GM18951 (cell line): ENCODE measurements at regions of chr9 and their contacts with region 1.

Region 1: DNA sequence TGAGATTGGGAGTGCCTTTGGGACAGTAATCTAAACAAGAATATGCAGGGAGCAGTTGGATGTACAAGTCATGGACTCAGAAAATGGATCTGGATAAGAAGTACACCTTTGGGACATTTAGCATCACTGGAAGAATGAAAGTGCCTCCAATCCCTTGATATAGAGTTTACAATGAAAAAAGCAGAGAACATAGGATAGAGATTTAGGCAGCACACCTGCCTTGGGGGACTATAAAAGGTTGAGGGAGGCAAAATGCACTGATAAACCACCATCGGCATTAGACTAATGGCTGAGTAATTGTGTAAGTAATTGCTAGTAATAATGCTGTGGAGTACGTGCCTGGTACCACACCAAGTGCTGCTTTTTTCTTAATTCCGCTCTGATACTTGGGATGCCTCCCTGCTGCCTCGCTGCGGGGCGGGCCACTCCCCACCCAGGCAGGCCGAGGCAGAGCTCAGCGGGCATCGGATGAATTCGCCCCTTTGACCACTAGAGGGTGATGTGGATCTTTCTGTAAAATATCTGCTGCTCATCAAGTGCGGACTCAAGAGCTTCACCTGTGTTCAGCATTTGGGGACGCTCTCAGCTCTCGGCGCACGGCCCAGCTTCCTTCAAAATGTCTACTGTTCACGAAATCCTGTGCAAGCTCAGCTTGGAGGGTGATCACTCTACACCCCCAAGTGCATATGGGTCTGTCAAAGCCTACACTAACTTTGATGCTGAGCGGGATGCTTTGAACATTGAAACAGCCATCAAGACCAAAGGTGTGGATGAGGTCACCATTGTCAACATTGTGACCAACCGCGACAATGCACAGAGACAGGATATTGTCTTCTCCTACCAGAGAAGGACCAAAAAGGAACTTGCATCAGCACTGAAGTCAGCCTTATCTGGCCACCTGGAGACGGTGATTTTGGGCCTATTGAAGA is 99.9 kb downstream of the ANKRD18B start:
- POLR2A ChIP-seq: no peak

Region 2: GRCh38 chr9:33721674-33722358 is 97.9 kb after region 1 on chr9:
- in situ Hi-C with region 1: loop called (anchors 5 kb)
- POLR2A ChIP-seq: no peak

Region 3: GRCh38 chr9:33816327-33817252 is 192.7 kb after region 1 on chr9 and contains the start of gene UBE2R2:
- in situ Hi-C with region 1: no loop called
- POLR2A ChIP-seq: peak; percentile 83

Region 4: GRCh38 chr9:33972698-33973097 is 348.8 kb after region 1 on chr9:
- in situ Hi-C with region 1: no loop called
- POLR2A ChIP-seq: no peak

Region 5: DNA sequence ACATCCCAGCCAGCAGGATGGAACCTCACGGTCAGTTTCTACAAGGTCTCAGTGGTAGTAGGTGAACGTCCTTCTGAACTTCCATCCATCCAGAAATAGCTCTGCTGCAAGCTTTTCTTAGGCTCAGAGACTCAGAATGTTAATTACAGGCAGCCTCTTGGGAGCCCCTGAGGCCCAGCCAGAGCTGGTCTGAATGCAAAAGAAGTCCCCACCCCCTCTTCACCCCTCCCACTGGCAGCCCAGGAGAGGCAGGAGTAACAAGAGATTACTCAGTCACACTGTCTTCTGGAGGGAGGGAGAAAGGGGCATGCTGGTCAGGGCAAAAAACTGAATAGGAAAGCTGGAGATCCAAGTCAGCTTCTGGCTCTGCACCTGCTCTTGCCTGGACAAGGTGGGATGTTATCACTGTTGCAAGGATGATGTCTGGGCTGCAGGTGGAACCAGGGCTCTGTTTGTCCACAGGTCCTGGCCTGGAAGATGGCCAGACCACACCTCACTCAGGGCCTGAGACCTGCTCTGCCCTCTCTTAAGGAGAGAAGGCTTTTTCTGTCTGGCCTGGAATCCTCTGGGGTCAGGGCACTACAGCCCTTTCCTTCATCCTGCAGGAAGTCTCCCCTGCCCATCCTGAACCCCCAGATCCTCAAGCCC is 889.8 kb after region 1 on chr9:
- in situ Hi-C with region 1: no loop called
- POLR2A ChIP-seq: no peak